PC-3 (cell line): ENCODE measurements at regions of chr20 and their contacts with region 1.

Region 1: DNA sequence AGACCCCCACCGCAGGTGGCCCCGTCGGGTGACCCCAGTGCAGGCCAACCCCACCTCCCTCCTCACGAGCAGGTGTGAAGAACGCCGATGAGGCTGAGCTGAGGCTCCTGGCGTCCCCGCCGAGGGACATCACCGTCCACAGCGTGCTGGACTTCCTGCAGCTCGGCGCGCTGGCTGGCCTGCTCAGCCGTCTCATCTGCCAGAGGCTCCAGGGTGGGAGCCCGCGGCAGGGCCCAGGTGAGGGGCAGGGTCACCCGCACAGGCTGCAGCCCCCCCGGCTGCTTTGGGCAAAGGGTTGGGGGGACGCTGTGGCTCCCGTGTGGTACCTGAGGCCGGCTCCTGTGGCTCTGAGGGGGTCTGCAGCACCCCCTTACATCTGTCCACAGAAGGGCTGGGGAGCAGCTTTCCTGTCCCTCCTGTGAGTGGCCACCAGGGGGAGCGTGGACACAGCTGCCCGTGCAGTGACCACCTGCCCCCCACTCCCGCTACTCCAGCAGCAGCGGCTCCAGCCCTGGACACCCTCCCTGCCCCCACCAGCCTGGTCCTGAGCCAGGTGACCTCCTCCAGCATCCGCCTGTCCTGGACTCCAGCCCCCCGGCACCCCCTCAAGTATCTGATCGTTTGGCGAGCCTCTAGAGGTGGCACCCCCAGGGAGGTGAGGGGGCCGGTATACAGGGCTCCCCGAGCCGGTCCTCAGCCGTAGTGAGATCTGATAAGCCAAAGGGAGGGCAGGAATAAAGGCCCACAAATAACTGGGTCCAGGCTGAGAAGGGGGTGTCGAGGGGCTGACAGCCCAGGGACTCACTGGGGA is 16.5 kb downstream of the COL20A1 start:
- DNase-seq: peak; percentile 35
- ATAC-seq: peak; percentile 75
- H3K4me3 ChIP-seq: no peak overlapping the region
- H3K27ac ChIP-seq: no peak overlapping the region
- H3K4me1 ChIP-seq: no peaks in the 10 kb centered on the region
- H3K27me3 ChIP-seq: peaks cover 16% of the 10 kb centered on the region; the same call in 1 of the 2 replicates
- CTCF ChIP-seq: peak; percentile 87

Region 2: GRCh38 chr20:63361519-63362425 is 52.3 kb after region 1 on chr20:
- CTCF ChIA-PET with region 1: interaction called, 10 read pairs
- POLR2A ChIA-PET with region 1: no interaction called
- intact Hi-C with region 1: no loop called
- DNase-seq: no peak
- ATAC-seq: no peak
- H3K4me3 ChIP-seq: no peak overlapping the region
- H3K27ac ChIP-seq: no peak overlapping the region
- H3K4me1 ChIP-seq: no peaks in the 10 kb centered on the region
- H3K27me3 ChIP-seq: 0 out of 2 replicates have a peak, but pooled peaks cover 4% of the 10 kb centered on the region
- CTCF ChIP-seq: no peak

Region 3: GRCh38 chr20:63381807-63382322 is 72.4 kb after region 1 on chr20:
- CTCF ChIA-PET with region 1: interaction called, 37 read pairs
- POLR2A ChIA-PET with region 1: no interaction called
- intact Hi-C with region 1: loop called (anchors 1 kb)
- DNase-seq: peak; percentile 25
- ATAC-seq: peak; percentile 45; the same call in 1 of the 2 replicates
- H3K4me3 ChIP-seq: no peak overlapping the region
- H3K27ac ChIP-seq: no peak overlapping the region
- H3K4me1 ChIP-seq: no peaks in the 10 kb centered on the region
- H3K27me3 ChIP-seq: peaks cover 38% of the 10 kb centered on the region
- CTCF ChIP-seq: peak; percentile 99